Posterior vena cava (tissue), 2 donors: ENCODE measurements at regions of chr5 and their contacts with region 1.

Region 1: GRCh38 chr5:81751009-81751835 is at the start of gene SSBP2:
- DNase-seq: peak; percentile 100
- total RNA-seq, gene SSBP2: 68.7 to 88.6 TPM

Region 2: DNA sequence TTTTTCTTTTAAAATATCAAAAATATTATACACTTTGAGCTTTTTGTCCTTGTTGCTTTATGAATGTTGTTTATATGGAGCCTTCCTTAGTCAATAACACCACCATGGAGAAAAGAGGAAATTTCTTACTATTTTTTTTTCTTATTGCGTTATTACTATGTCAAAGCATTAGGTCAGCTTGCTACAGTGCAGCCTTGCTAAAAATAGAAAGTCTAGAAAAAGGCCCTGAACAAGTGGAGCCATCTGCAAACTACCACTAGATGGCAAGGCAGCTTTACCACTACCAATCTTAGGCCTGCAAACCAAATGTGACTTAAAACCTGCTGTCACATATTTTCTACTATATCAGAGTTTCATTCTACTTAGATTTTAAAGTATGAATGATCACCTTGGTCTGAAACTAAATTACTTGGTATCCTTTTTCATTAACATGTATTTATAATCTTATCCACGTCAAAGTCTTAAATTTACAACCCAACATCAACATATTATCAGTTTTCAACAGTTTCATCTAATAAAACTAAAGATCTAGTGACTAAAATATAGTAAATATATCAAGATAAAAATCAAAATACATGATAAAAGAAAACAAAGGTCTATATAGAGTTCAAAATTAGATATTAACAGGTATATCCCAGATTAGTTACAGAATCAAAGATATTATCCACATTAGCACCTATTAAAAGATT is 244.2 kb before region 1 on chr5:
- intact Hi-C with region 1: loop called (anchors 10 kb)
- DNase-seq: no peak

Region 3: DNA sequence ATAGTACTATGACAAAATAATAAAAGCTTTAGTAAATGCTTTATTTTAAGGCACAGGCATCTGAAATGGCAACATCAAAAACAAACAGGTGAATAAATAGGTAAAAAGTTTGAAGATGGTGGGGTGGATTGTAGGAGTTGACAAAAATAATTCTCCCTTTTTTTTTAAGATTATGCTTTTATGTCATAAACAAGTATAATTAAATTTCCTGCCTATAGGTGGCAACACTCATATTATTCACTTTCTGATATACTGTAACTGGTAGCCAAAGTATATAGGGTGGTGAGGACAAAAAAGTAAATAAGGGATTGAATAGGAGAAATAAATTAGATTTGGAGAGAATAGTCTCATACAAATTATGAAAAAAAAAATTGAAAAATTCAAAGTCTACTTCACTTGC is 237.2 kb before region 1 on chr5:
- intact Hi-C with region 1: loop called (anchors 10 kb)
- DNase-seq: no peak

Region 4: GRCh38 chr5:81729276-81729675 is 21.9 kb before region 1 on chr5:
- intact Hi-C with region 1: no loop called
- DNase-seq: no peak

Region 5: GRCh38 chr5:81851481-81852178 is 100.4 kb after region 1 on chr5:
- intact Hi-C with region 1: loop called (anchors 2 to 10 kb)
- DNase-seq: peak; percentile 98

Region 6: GRCh38 chr5:81971712-81972495 is 220.7 kb after region 1 on chr5 and contains the start of gene ATG10:
- intact Hi-C with region 1: loop called in 1 of 2 experiments (anchors 10 kb)
- DNase-seq: peak; percentile 97
- total RNA-seq, gene ATG10: 6.8 to 9.8 TPM

Region 7: DNA sequence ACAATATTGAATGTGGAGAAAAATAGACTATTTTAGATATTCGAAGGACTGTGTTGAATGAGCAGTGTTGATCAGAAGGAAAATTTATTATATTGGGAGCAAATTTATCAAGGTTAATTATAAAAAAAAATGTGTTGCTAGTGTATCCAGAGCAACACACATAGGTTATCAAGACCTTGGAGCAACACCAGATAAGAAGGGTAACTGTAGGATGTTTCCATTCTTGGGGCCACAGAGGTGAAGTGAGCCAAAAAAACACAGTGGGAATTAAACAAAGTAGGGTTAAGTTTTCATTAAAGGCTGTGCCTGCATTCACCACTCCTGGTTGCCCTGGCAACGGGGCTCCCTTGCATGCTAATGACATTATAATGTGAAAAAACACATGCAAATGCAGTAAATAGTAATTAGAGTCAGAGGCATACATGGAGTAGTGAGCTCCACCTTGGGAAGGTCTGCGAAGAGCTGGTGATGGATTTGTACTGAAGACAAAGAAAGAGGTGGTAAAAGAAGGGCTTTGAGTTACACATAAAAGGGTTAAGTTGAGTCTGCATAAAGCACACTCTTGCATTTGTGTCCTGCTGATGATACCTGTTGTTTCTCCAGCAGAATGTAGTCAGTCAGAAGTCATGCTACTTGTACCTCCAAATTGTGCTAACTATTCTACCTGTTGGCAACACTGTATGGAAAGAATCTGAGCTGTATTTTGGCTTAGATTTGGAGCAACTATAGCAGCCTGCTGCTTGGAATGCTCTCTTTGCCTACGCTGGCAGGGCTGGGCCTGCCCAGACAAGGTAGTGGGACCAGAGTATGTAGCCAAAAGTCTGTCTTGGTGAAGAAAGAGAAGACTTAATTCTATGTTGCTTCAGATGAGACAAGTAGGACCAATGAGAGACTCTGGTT is 280.2 kb after region 1 on chr5:
- intact Hi-C with region 1: no loop called
- DNase-seq: no peak

Region 8: GRCh38 chr5:82165740-82166530 is 414.7 kb after region 1 on chr5:
- intact Hi-C with region 1: loop called in 1 of 2 experiments (anchors 10 kb)
- DNase-seq: peak; percentile 85